T-cell (primary cell): ENCODE measurements at regions of chr9 and their contacts with region 1.

Region 1: DNA sequence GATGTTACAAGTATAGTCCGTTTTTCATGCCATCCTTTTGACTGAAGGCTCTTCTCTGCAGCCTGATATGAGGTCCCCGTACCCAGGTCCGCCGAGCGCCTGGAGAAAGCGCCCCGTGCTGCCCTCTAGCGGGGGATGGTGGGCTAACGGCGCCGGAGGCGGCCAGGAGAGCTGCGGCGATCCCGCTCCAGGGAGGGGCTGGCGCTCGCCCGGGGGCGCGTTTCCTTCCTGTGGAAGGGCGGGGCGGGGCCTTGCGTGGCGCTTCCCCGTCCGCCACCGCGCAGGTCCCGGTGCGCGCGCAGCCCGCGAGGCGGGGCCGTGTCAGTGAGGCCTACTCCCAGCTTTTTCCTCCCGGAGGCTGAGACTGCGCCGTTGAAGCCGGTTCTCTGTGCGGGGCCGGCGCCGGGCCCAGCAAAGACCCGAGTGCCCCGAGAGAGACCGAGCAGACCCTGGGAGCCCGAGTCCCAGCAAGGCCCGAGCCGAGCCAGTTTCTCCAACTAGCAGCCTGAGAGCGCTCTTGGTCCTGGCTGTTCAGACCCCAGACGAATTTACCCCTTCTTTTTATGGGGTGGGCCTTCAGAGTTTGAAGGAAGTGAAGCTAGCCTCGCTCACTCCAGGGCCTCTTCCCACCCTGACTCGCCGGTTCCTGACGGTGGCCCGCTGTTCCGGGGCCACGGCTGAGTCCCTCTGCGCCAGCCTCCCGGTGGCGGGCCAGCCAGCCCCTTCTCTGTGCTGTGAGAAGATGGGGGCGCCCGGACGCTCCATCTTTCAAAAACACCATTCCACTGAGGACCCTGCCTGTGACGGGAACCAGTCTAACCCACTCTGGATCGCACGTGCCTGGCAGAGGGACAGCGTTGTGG is 9.7 kb upstream of the PHF2 start:
- DNase-seq: peak; percentile 93 to 100 (median 97)
- ATAC-seq: peak; percentile 93 to 99 (median 96)
- H3K4me3 ChIP-seq: peak overlapping the region; percentile 62 to 75
- H3K4me3 Mint-ChIP-seq: peak overlapping the region; percentile 80 to 86 (median 82)
- H3K27ac ChIP-seq: peak overlapping the region; percentile 88
- H3K27ac Mint-ChIP-seq: peak overlapping the region; percentile 94 to 95
- H3K4me1 ChIP-seq: peaks cover 0 to 13% of the 10 kb centered on the region in 2 experiments
- H3K4me1 Mint-ChIP-seq: peaks cover 18 to 27% (median 18%) of the 10 kb centered on the region in 3 donors
- H3K27me3 ChIP-seq: no peaks in the 10 kb centered on the region
- H3K27me3 Mint-ChIP-seq: no peaks in the 10 kb centered on the region

Region 2: GRCh38 chr9:93453047-93453914 is 113.4 kb before region 1 on chr9 and contains the start of gene FAM120AOS:
- CTCF ChIA-PET with region 1: interaction called in 1 of 2 experiments, 14 read pairs
- POLR2A ChIA-PET with region 1: no interaction called
- DNase-seq: peak; percentile 54 to 93 (median 79)
- ATAC-seq: peak; percentile 63 to 77 (median 69)
- H3K4me3 ChIP-seq: peak within 1 kb of the TSS; percentile 80 to 94
- H3K4me3 Mint-ChIP-seq: peak within 1 kb of the TSS; percentile 88 to 94 (median 90)
- H3K27ac ChIP-seq: peak within 1 kb of the TSS; percentile 70
- H3K27ac Mint-ChIP-seq: peak within 1 kb of the TSS; percentile 93 to 96
- H3K4me1 ChIP-seq: peaks cover 36 to 38% of the 10 kb centered on the region in 2 experiments
- H3K4me1 Mint-ChIP-seq: peaks cover 56 to 71% (median 61%) of the 10 kb centered on the region in 3 donors
- H3K27me3 ChIP-seq: no peaks in the 10 kb centered on the region
- H3K27me3 Mint-ChIP-seq: no peaks in the 10 kb centered on the region
- total RNA-seq, gene FAM120AOS: 35.7 to 44.0 (median 41.4) TPM

Region 3: GRCh38 chr9:93549611-93550010 is 17.0 kb before region 1 on chr9:
- CTCF ChIA-PET with region 1: interaction called in 1 of 2 experiments, 10 read pairs
- POLR2A ChIA-PET with region 1: no interaction called
- DNase-seq: no peak
- ATAC-seq: no peak
- H3K4me3 ChIP-seq: no peak overlapping the region
- H3K4me3 Mint-ChIP-seq: no peak overlapping the region
- H3K27ac ChIP-seq: no peak overlapping the region
- H3K27ac Mint-ChIP-seq: peak overlapping the region in 1 of 2 donors; percentile 11
- H3K4me1 ChIP-seq: no peaks in the 10 kb centered on the region
- H3K4me1 Mint-ChIP-seq: no peaks in the 10 kb centered on the region
- H3K27me3 ChIP-seq: no peaks in the 10 kb centered on the region
- H3K27me3 Mint-ChIP-seq: no peaks in the 10 kb centered on the region